ENCODE measurements at regions of chr2 and their contacts with region 1.

Region 1: GRCh38 chr2:232455426-232456255 is at the start of gene ALPI:
- DNase-seq: no peak
- ATAC-seq: peak in 1 of 8 donors; percentile 30
- H3K4me3 ChIP-seq: no peak within 1 kb of the TSS
- H3K27ac ChIP-seq: no peak within 1 kb of the TSS
- H3K4me1 ChIP-seq: no peaks in the 10 kb centered on the region
- H3K27me3 ChIP-seq: peaks cover 0 to 50% (median 32%) of the 10 kb centered on the region in 7 donors
- CTCF ChIP-seq: no peak
- total RNA-seq, gene ALPI: not detected

Region 2: DNA sequence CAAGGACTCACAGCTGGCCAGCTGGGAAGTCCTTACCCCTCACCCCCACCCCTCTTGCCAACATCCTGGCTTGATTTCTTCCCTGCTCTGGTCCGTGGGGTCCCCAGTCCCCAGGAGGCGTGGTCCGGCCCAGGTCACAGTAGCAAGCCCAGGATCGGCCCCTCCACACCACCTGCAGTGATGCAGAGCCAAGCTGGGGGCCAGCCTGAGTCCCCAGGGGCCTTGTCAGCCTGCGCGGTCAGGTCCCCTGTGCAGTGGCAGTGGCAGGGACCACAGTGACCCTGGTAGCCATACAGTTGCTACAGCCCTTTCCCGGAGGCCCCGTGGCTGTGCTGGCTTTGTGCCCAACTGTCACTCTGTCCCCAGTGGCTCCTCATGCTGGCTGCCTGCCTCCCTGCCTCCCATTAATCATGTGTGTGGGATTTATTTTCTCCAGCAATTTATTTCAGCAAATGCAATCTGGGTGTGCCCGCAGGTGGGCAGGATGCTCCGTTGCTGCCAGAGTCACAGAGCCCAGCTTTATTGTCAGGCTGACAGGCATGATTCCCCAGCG is 55.8 kb after region 1 on chr2:
- intact Hi-C with region 1: loop called in 1 of 10 experiments (anchors 5 kb)
- DNase-seq: peak; percentile 51 to 55
- ATAC-seq: peak in 7 of 8 donors; percentile 49 to 82 (median 71)
- H3K4me3 ChIP-seq: no peak overlapping the region
- H3K27ac ChIP-seq: no peak overlapping the region
- H3K4me1 ChIP-seq: peaks cover 0 to 3% (median 0%) of the 10 kb centered on the region in 9 donors
- H3K27me3 ChIP-seq: peaks cover 0 to 38% (median 12%) of the 10 kb centered on the region in 7 donors
- CTCF ChIP-seq: no peak